Left colon (tissue), 2 donors: ENCODE measurements at regions of chr10 and their contacts with region 1.

Region 1: GRCh38 chr10:63711867-63712716 is 190.9 kb downstream of the REEP3 start:
- DNase-seq: peak; percentile 94 to 99
- ATAC-seq: peak; percentile 94

Region 2: DNA sequence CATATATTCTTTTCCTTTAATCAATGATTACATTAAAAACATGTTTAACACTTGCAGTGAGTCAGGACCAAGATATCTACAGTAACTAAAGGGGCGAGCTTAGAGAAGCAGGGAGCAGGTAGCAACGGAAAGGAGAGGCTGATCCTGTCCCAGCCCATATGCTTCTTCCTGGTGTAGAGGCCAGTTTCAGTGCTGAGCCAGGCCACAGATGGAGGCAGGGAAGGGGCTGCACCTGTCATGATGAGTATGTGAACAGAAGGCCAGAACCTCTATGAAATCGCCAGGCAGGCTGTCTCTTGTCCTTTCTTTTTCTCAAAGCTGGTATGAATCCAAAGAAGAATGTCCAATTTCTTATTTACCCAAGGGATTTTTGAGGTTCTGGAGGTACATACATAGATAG is 174.6 kb before region 1 on chr10:
- intact Hi-C with region 1: loop called in 1 of 2 experiments (anchors 10 kb)
- DNase-seq: no peak
- ATAC-seq: no peak

Region 3: DNA sequence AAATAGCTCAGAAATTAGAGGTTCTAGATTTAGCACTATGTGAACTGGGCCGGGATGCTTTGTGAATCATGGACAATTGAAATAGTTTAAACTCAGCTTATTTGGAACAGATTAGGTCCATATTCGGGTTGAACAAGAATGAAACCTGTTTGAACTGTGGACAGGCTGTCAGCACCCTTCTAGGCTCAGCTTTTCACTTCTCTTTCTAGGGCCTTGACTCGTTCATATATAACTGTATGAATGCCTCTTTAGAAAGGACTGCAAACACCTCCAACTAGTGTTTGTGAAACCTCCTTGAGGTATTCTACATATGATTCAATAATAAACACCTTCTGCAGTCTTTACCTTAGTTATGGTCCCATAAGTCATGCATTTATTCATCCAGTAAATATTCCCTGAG is 75.3 kb before region 1 on chr10:
- intact Hi-C with region 1: loop called in 1 of 2 experiments (anchors 5 kb)
- DNase-seq: no peak
- ATAC-seq: no peak